Lower leg skin (tissue), 4 donors: ENCODE measurements at regions of chr3 and their contacts with region 1.

Region 1: GRCh38 chr3:49619649-49620048 is 54.5 kb upstream of the APEH start:
- DNase-seq: no peak
- H3K4me3 ChIP-seq: no peak overlapping the region
- CTCF ChIP-seq: no peak
- POLR2A ChIP-seq: no peak

Region 2: DNA sequence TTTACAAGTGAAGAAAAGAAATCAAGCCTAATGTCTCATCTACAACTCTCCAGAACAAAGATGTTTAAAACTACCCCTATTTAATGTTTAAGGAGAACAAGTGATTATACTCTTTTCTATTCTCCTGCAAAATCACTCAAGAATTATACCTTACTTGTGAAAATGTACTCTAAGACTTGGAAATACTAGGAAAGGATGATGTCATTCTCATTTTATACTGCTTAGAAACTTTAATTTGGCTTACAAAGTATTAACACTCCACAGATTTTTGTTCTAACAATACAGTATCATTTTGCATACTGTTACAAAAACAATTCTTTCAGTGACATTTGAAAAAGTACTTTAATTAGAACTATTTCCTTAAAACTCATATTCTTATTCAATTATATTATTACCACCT is 1927.5 kb before region 1 on chr3:
- intact Hi-C with region 1: loop called (anchors 5 kb)
- DNase-seq: no peak
- H3K4me3 ChIP-seq: no peak overlapping the region
- CTCF ChIP-seq: no peak
- POLR2A ChIP-seq: no peak